Esophagus muscularis mucosa (tissue), 4 donors: ENCODE measurements at regions of chr1 and their contacts with region 1.

Region 1: DNA sequence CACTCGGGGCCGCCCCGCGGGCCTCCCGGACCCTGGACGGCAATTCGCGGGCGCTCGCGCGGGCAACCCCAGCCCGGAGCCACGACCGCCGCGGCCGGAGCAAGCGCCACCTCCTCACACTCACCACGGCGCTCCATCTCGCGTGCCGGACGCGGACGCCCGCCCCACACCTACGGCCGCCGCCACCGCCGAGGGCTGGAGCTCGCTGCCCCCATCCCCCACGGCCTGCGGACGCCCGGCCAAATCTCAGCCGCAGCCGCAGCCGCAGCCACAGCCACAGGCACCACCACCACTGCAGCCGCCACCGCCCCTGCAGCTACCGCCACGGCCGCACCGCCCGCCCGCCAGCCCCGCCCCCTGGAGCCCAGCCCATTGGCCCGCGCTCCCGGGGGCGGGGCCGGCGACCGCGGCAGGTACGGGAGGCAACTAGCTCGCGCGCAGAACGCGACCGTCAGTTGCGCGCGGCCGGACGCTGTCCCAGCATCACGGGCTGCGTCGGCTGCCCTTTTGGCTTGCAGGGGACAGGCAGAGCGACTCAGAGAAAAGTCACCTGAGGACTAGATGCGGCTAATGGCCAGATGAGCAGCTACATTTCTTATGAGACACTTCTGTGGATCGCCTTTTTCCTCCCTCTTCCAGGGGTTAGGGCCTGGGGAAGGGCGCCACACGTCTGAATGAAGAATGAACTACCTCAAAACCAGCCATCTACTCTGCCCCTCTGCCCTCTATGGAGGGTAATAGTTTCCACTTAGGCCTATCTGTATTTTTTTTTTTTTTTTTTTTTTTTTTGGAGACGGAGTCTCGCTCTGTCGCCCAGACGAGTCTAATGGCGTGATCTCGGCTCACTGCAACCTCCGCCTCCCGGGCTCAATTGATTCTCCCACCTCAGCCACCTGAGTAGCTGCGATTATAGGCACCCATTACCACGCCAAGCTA is at the start of gene ARHGAP29:
- DNase-seq: no peak
- H3K4me3 ChIP-seq: peak within 1 kb of the TSS; percentile 80 to 96 (median 90)
- H3K27ac ChIP-seq: peak within 1 kb of the TSS; percentile 87 to 92 (median 91)
- H3K4me1 ChIP-seq: peaks cover 10 to 35% (median 28%) of the 10 kb centered on the region in 4 donors
- H3K27me3 ChIP-seq: peaks cover 0 to 22% (median 0%) of the 10 kb centered on the region in 4 donors
- CTCF ChIP-seq: no peak
- EP300 ChIP-seq: no peak
- POLR2A ChIP-seq: peak; percentile 26
- total RNA-seq, gene ARHGAP29: 18.4 to 40.2 (median 23.7) TPM

Region 2: GRCh38 chr1:94045465-94046056 is 192.0 kb before region 1 on chr1:
- intact Hi-C with region 1: loop called (anchors 5 kb)
- DNase-seq: peak; percentile 93
- H3K4me3 ChIP-seq: peak overlapping the region; percentile 24 to 35 (median 29)
- H3K27ac ChIP-seq: peak overlapping the region; percentile 60 to 78 (median 66)
- H3K4me1 ChIP-seq: peaks cover 27 to 61% (median 37%) of the 10 kb centered on the region in 4 donors
- H3K27me3 ChIP-seq: no peaks in the 10 kb centered on the region
- CTCF ChIP-seq: peak; percentile 52 to 72 (median 62)
- EP300 ChIP-seq: no peak
- POLR2A ChIP-seq: no peak

Region 3: DNA sequence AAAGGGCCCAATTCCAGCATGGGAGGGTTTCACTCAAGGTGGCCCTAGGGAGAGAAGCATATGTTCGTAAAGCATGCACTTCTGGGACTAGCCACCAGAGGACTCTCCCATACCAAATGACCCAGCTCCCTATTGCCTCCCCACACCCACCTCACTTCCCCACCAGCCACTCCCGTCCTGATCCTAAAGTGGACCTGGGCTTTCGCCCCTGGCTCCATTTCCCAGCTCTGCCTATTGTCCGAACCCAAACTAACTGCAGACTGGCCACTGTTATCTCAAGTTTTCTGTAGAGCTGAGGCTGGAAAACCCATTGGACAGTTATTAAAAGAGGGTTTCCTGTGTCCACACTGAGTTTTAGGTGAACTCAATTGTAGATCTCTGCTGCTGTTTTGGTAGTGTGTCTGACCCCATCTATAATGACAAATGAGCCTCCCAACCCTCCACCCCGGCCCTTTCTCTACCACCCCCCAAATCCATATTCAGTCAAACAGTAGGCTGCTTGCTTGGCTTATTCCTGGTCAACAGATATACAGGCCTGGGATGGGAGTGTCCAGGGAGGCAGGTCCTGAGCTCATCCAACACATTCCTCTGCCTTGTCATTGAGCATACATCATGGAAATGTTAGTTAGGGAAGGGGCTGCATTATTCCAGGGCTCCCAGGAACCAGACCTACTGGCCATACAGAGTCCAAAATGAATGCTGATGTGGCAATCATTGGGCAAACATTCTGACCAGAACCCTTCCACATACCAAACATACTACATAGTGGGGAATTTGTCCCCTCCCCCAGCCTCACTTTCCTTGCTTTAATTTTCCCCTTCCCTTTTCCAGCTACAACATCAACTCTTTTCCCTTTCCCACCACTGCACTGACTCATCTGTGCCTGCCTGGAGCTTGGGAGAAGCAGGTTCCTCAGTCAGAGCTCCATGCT is 175.8 kb before region 1 on chr1:
- intact Hi-C with region 1: loop called (anchors 5 kb)
- DNase-seq: no peak
- H3K4me3 ChIP-seq: no peak overlapping the region
- H3K27ac ChIP-seq: no peak overlapping the region
- H3K4me1 ChIP-seq: peaks cover 15 to 39% (median 26%) of the 10 kb centered on the region in 4 donors
- H3K27me3 ChIP-seq: no peaks in the 10 kb centered on the region
- CTCF ChIP-seq: peak; percentile 90 to 95 (median 94)
- EP300 ChIP-seq: no peak
- POLR2A ChIP-seq: no peak

Region 4: DNA sequence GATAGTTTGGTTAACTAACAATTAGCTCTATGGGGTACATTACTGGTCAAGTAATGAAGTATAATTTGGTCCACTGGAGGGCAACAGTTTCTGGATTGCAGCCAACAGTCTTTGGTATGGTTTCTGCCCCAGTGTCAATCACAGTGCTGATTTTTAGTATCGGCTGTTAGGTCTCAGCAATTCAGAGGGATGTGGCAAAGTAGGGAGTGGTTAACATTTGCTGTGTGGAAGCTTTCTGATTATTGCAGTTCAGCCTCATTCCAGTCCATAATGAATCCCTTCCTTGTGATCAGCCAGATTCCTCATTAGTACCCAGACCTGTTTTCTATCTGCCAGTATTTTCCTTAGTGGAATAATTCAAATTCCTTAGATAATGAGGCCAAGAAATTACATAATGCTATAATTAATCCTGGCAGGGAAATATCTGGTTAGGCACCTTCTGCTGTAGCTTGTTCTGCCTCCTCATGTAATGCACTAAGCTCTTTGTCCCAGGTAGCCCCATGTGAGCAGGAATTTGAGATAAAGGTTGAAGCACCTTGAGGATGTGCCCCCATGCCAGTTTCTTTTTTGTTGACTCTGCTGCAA is 290.0 kb after region 1 on chr1:
- intact Hi-C with region 1: no loop called
- DNase-seq: no peak
- H3K4me3 ChIP-seq: no peak overlapping the region
- H3K27ac ChIP-seq: no peak overlapping the region
- H3K4me1 ChIP-seq: peaks cover 3 to 10% (median 8%) of the 10 kb centered on the region in 4 donors
- H3K27me3 ChIP-seq: no peaks in the 10 kb centered on the region
- CTCF ChIP-seq: no peak
- EP300 ChIP-seq: no peak
- POLR2A ChIP-seq: no peak